Testis (tissue), 5 donors: ENCODE measurements at regions of chr4 and their contacts with region 1.

Region 1: GRCh38 chr4:141133146-141133998 is at the start of gene RNF150:
- DNase-seq: peak; percentile 91
- H3K4me3 ChIP-seq: peak within 1 kb of the TSS; percentile 80 to 89
- H3K27ac ChIP-seq: peak within 1 kb of the TSS; percentile 60 to 76
- H3K4me1 ChIP-seq: peaks cover 12% of the 10 kb centered on the region
- H3K27me3 ChIP-seq: no peaks in the 10 kb centered on the region
- CTCF ChIP-seq: peak; percentile 74 to 84 (median 78)
- POLR2A ChIP-seq: no peak
- total RNA-seq, gene RNF150: 6.5 to 7.8 TPM

Region 2: DNA sequence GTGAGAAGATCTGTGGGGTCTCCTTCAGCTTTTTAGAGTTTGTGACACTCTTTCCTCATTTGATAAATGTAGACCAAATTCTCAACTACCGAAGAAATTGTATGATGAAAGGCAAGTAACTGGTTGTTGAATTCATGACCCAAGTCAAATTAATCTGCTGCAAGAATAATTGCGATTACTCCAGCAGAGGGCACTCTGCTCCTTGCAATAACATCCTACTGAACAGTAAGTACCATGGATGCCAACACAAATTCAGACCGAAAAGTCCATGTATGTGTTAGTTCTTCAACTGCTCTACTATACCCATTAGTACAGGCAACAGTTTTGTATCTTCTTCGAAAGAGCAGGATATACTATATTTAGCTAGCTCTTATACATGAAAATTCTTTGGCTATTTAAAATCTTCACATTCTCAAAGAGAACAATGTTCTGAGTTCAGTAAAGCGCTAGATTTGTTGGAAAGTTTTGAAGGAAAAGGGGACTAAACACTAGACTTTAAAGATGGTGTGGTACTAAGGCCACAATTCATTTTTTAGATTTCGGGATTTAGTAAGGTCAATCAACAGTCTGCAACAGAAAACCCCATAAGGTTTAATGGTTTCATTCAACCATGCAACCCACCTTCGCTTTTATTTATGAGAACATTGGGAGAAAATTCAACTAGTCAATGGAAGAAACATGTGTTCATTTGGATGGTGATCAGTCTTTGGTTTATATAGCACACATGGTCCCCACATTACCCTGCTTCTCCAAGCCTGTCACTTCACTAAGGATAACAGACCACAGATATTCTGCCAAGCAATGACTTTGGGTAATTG is 271.8 kb before region 1 on chr4:
- intact Hi-C with region 1: loop called (anchors 5 kb)
- DNase-seq: peak; percentile 92
- H3K4me3 ChIP-seq: no peak overlapping the region
- H3K27ac ChIP-seq: no peak overlapping the region
- H3K4me1 ChIP-seq: no peaks in the 10 kb centered on the region
- H3K27me3 ChIP-seq: no peaks in the 10 kb centered on the region
- CTCF ChIP-seq: peak; percentile 78 to 85 (median 78)
- POLR2A ChIP-seq: no peak